ENCODE measurements at regions of chr6 and their contacts with region 1.

Region 1: GRCh38 chr6:127924440-127924839 is 23.6 kb upstream of the THEMIS start:
- DNase-seq: no peak
- ATAC-seq: no peak
- H3K4me3 ChIP-seq: no peak overlapping the region
- H3K27ac ChIP-seq: no peak overlapping the region
- H3K4me1 ChIP-seq: no peaks in the 10 kb centered on the region
- H3K27me3 ChIP-seq: no peaks in the 10 kb centered on the region
- CTCF ChIP-seq: no peak

Region 2: DNA sequence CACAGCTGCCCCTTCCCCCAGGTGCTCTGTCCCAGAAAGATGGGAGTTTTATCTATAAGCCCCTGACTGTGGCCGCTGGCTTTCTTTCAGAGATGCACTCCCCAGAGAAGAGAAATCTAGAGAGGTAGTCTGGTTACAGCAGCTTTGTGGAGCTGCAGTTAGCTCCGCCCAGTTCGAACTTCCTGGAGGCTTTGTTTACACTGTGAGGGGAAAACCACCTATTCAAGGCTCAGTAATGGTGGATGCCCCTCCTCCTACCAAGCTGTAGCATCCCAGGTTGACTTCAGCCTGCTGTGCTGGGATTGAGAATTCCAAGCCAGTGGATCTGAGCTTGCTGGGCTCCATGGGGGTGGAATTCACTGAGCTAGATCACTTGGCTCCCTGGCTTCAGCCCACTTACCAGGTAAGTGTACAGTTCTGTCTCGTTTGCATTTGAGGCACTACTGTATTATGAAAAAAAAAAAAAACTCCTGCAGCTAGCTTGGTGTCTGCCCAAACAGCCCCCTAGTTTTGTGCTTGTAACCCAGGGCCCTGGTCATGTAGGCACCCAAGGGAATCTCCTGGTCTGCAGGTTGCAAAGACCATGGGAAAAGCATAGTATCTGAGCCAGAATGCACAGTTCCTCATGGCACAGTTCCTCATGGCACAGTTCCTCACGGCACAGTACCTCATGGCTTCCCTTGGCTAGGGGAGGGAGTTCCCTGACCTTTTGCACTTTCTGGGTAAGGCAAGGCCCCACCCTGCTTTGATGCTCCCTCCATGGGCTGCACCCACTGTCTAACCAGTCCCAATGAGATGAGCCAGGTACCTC is 1309.6 kb before region 1 on chr6:
- CTCF ChIA-PET with region 1: interaction called, 10 read pairs
- POLR2A ChIA-PET with region 1: no interaction called
- in situ Hi-C with region 1: no loop called
- intact Hi-C with region 1: no loop called
- DNase-seq: no peak
- ATAC-seq: no peak
- H3K4me3 ChIP-seq: no peak overlapping the region
- H3K27ac ChIP-seq: no peak overlapping the region
- H3K4me1 ChIP-seq: no peaks in the 10 kb centered on the region
- H3K27me3 ChIP-seq: no peaks in the 10 kb centered on the region
- CTCF ChIP-seq: no peak

Region 3: GRCh38 chr6:127453845-127454619 is 470.4 kb before region 1 on chr6:
- CTCF ChIA-PET with region 1: no interaction called
- POLR2A ChIA-PET with region 1: no interaction called
- in situ Hi-C with region 1: no loop called
- intact Hi-C with region 1: no loop called
- DNase-seq: no peak
- ATAC-seq: no peak
- H3K4me3 ChIP-seq: no peak overlapping the region
- H3K27ac ChIP-seq: no peak overlapping the region
- H3K4me1 ChIP-seq: no peaks in the 10 kb centered on the region
- H3K27me3 ChIP-seq: no peaks in the 10 kb centered on the region
- CTCF ChIP-seq: no peak

Region 4: DNA sequence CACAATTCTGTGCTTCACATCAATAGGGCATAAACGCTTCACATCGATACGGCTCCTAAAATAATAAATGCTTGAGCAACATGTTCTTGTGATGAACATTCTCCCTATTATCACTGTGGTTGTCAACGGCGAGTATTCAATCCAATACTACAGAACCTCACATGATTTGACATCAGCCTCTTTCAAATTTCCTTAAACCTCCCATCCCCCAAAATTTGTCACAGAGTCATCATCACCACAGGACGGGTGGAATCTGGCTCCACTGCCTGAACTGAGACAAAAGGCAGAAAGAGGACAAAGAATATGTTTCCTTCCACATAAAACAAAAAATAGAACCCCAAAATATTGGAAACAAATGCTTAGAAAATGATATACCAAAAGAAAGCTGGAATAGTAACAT is 30.9 kb before region 1 on chr6:
- CTCF ChIA-PET with region 1: no interaction called
- POLR2A ChIA-PET with region 1: no interaction called
- in situ Hi-C with region 1: no loop called
- intact Hi-C with region 1: no loop called
- DNase-seq: no peak
- ATAC-seq: no peak
- H3K4me3 ChIP-seq: no peak overlapping the region
- H3K27ac ChIP-seq: no peak overlapping the region
- H3K4me1 ChIP-seq: no peaks in the 10 kb centered on the region
- H3K27me3 ChIP-seq: no peaks in the 10 kb centered on the region
- CTCF ChIP-seq: no peak

Region 5: DNA sequence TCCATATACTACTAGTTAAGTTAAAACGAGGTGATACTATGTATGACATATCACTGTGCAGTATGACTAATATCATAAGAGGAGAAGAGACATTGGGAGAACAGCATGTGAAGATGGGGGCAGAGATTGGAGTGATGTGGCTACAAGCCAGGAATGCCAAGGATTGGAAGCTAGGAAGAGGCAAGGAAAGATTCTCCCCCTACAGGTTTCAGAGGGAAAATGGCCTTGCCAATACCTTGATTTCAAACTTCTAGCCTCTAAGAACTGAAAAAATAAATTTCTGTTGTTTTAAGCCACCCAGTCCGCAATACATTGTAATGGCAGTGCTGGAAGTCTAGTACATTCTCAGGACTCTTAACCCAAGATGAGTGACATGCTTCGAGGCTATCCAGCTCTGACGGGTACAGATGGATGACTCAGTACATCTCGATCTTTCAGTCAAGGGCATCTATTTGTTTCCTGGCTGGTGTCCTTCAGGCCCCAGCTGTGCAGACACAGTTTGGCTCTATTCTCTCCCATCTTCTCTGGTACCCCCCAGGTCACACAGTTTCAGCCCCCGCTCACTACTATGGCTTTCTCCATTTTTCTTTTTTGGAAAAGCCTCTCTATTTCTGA is 31.9 kb after region 1 on chr6:
- CTCF ChIA-PET with region 1: no interaction called
- POLR2A ChIA-PET with region 1: no interaction called
- in situ Hi-C with region 1: no loop called
- intact Hi-C with region 1: no loop called
- DNase-seq: no peak
- ATAC-seq: no peak
- H3K4me3 ChIP-seq: no peak overlapping the region
- H3K27ac ChIP-seq: no peak overlapping the region
- H3K4me1 ChIP-seq: no peaks in the 10 kb centered on the region
- H3K27me3 ChIP-seq: no peaks in the 10 kb centered on the region
- CTCF ChIP-seq: peak; percentile 26